ENCODE measurements at regions of chr19 and their contacts with region 1.

Region 1: GRCh38 chr19:39996811-39997594 is at the start of gene ZNF546:
- DNase-seq: peak; percentile 92
- ATAC-seq: peak; percentile 93
- H3K4me3 ChIP-seq: peak within 1 kb of the TSS; percentile 59 to 98 (median 92)
- H3K4me3 Mint-ChIP-seq: peak within 1 kb of the TSS; percentile 96
- H3K27ac ChIP-seq: peak within 1 kb of the TSS; percentile 78 to 89
- H3K27ac Mint-ChIP-seq: peak within 1 kb of the TSS; percentile 92
- H3K4me1 ChIP-seq: peaks cover 9 to 16% of the 10 kb centered on the region in 2 donors
- H3K4me1 Mint-ChIP-seq: peaks cover 28% of the 10 kb centered on the region
- H3K27me3 ChIP-seq: no peaks in the 10 kb centered on the region
- H3K27me3 Mint-ChIP-seq: no peaks in the 10 kb centered on the region
- CTCF ChIP-seq: no peak
- total RNA-seq, gene ZNF546: 15.7 and 16.6 TPM in 2 replicates

Region 2: DNA sequence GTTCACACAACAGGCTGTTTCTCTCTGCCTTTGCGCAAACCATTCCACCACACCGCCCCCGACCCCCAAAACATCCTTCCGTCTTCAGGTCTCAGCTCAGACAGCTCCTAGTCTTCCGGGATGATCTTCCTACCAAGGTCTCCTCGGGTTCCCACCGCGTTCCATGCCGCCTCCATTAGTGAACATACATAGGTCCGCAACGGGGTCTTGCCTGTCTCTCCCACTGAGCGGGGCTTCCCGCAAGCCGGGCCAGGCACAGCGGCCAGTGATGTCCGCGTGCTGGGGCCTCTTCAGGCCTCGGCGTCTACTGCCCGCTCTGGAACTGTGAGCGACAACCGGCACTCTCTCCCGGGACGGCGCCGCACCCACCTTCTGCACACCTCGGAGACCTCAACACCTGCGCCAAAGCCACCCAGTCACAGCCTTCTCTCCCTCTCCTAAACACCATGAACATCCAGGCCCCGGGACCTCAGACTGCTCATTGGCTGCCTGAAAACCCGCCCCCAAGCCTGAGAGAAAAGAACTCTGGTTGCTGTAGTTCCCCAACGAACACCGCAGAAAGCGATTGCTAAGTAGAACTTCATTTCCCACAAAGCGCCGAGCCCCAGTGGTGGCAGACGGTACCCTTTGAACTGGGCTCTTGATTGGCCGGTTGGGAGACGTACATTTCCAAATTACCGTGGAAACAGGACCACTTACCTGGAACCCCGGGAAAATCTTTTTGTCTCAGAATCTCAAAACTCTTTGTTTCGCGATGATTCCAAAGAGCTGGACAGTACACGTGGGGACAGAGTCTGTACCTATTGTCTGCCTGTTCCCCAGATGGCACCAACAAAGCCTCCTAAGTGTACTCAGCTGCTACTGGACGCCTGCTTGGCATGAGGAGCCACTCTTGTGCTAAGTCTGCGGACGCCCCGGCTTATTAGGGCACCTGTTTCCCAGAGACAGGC is 172.6 kb before region 1 on chr19:
- CTCF ChIA-PET with region 1: no interaction called
- POLR2A ChIA-PET with region 1: no interaction called
- intact Hi-C with region 1: loop called (anchors 1 kb)
- DNase-seq: peak; percentile 92
- ATAC-seq: peak; percentile 98
- H3K4me3 ChIP-seq: peak overlapping the region; percentile 66 to 85 (median 79)
- H3K4me3 Mint-ChIP-seq: no peak overlapping the region
- H3K27ac ChIP-seq: peak overlapping the region; percentile 38 to 55
- H3K27ac Mint-ChIP-seq: no peak overlapping the region
- H3K4me1 ChIP-seq: peaks cover 18 to 30% of the 10 kb centered on the region in 2 donors
- H3K4me1 Mint-ChIP-seq: peaks cover 13% of the 10 kb centered on the region
- H3K27me3 ChIP-seq: no peaks in the 10 kb centered on the region
- H3K27me3 Mint-ChIP-seq: no peaks in the 10 kb centered on the region
- CTCF ChIP-seq: no peak

Region 3: GRCh38 chr19:39941615-39942365 is 55.2 kb before region 1 on chr19:
- CTCF ChIA-PET with region 1: interaction called, 3 read pairs
- POLR2A ChIA-PET with region 1: no interaction called
- intact Hi-C with region 1: loop called (anchors 1 kb)
- DNase-seq: peak; percentile 89
- ATAC-seq: peak; percentile 91
- H3K4me3 ChIP-seq: peak overlapping the region; percentile 27 to 53 (median 41)
- H3K4me3 Mint-ChIP-seq: peak overlapping the region; percentile 60
- H3K27ac ChIP-seq: peak overlapping the region; percentile 57 to 78
- H3K27ac Mint-ChIP-seq: peak overlapping the region; percentile 29
- H3K4me1 ChIP-seq: peaks cover 62 to 64% of the 10 kb centered on the region in 2 donors
- H3K4me1 Mint-ChIP-seq: peaks cover 63% of the 10 kb centered on the region
- H3K27me3 ChIP-seq: no peaks in the 10 kb centered on the region
- H3K27me3 Mint-ChIP-seq: no peaks in the 10 kb centered on the region
- CTCF ChIP-seq: no peak

Region 4: DNA sequence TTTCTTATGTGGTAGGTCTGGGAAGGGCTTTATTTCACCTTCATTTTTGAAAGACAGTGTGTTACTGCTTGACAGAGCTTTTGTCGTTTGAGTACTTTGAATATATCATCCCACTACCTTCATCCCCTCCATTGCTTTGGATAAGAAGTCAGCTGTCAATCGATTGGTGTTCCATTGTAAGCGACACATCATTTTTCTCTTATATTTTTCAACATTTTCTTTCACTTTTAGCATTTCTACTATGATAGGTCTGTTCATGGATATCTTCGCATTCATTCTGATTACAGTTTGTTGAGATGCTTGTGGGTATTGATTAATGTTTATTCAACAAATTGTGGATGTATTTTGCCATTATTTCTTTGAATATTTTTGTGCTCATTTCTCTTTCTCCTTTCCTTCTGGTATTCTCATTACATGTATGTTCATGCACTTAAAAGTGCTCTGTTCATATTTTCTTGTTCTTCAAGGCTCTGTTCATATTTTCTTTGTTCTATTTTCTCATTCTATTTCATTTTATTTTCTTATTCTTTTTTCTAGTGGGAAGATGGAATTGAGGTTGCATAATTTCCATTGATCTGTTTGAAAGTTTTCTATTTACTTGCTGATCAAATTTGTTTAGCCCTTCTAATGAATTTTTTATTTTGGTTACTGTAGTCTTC is 29.1 kb after region 1 on chr19:
- CTCF ChIA-PET with region 1: no interaction called
- POLR2A ChIA-PET with region 1: no interaction called
- intact Hi-C with region 1: no loop called
- DNase-seq: no peak
- ATAC-seq: no peak
- H3K4me3 ChIP-seq: no peak overlapping the region
- H3K4me3 Mint-ChIP-seq: no peak overlapping the region
- H3K27ac ChIP-seq: no peak overlapping the region
- H3K27ac Mint-ChIP-seq: no peak overlapping the region
- H3K4me1 ChIP-seq: no peaks in the 10 kb centered on the region
- H3K4me1 Mint-ChIP-seq: no peaks in the 10 kb centered on the region
- H3K27me3 ChIP-seq: no peaks in the 10 kb centered on the region
- H3K27me3 Mint-ChIP-seq: no peaks in the 10 kb centered on the region
- CTCF ChIP-seq: no peak

Region 5: GRCh38 chr19:40055832-40056504 is 59.0 kb after region 1 on chr19 and contains the start of gene ZNF780B:
- CTCF ChIA-PET with region 1: no interaction called
- POLR2A ChIA-PET with region 1: no interaction called
- intact Hi-C with region 1: loop called (anchors 5 kb)
- DNase-seq: peak; percentile 82
- ATAC-seq: peak; percentile 93
- H3K4me3 ChIP-seq: peak within 1 kb of the TSS; percentile 65 to 86 (median 77)
- H3K4me3 Mint-ChIP-seq: peak within 1 kb of the TSS; percentile 99
- H3K27ac ChIP-seq: peak within 1 kb of the TSS; percentile 76 to 78
- H3K27ac Mint-ChIP-seq: peak within 1 kb of the TSS; percentile 94
- H3K4me1 ChIP-seq: peaks cover 13 to 17% of the 10 kb centered on the region in 2 donors
- H3K4me1 Mint-ChIP-seq: peaks cover 50% of the 10 kb centered on the region
- H3K27me3 ChIP-seq: no peaks in the 10 kb centered on the region
- H3K27me3 Mint-ChIP-seq: no peaks in the 10 kb centered on the region
- CTCF ChIP-seq: no peak
- total RNA-seq, gene ZNF780B: 57.4 and 57.6 TPM in 2 replicates

Region 6: DNA sequence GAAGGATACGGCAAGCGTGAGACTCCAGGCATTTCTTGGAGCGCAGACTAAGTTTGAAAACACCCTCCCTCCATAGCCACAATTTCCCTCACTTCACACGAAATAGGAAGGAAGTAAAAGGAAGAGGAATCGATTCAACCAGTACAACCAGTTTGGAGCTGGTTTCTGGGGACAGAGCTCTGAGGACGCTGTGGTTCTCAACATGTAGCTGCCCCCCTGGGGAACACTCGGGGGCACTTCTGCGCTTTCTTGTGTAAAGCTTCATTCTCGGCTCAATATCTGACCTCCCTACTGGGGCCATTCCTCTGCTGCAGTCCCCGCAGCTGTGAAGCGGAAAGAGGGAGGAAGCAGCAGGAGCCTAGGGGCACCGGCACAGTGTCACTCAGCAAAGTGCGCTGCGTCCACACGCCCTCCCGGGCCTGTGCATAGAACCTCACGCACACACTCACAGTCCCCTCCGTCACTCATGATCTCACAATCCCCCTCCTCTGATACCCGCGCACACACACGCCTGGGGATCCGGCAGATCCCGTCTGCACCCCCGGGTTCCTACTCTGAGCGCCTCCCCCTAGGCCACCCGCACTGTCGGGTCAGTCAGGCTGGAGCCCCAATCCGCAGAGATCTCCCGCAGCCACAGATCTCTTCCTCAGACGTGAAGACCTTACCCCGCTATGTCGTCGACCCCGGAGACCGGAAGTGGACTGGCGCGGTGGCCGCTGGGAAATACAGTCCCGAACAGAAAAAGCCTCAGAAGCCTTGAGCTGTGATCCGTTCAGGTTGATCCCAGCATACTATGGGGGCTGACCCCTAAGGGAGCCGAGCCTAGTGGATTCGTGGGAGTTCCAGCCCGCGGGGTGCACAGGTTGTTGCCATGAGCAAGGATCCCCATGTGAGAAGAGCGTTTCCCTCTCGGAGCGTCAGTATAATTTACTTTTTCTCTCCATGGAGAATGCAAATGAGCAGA is 93.5 kb after region 1 on chr19 and contains the start of gene ZNF780A:
- CTCF ChIA-PET with region 1: interaction called, 3 read pairs
- POLR2A ChIA-PET with region 1: no interaction called
- intact Hi-C with region 1: loop called (anchors 5 kb)
- DNase-seq: peak; percentile 75
- ATAC-seq: peak; percentile 88
- H3K4me3 ChIP-seq: peak within 1 kb of the TSS; percentile 85 to 94 (median 88)
- H3K4me3 Mint-ChIP-seq: peak within 1 kb of the TSS; percentile 99
- H3K27ac ChIP-seq: peak within 1 kb of the TSS; percentile 79 to 86
- H3K27ac Mint-ChIP-seq: peak within 1 kb of the TSS; percentile 99
- H3K4me1 ChIP-seq: peaks cover 12 to 16% of the 10 kb centered on the region in 2 donors
- H3K4me1 Mint-ChIP-seq: peaks cover 37% of the 10 kb centered on the region
- H3K27me3 ChIP-seq: peaks cover 0 to 7% (median 4%) of the 10 kb centered on the region in 4 experiments
- H3K27me3 Mint-ChIP-seq: peaks cover 21% of the 10 kb centered on the region
- CTCF ChIP-seq: no peak
- total RNA-seq, gene ZNF780A: 32.3 and 32.8 TPM in 2 replicates

Measured in B cell (primary cell).